ENCODE measurements at regions of chr1 and their contacts with region 1.

Region 1: DNA sequence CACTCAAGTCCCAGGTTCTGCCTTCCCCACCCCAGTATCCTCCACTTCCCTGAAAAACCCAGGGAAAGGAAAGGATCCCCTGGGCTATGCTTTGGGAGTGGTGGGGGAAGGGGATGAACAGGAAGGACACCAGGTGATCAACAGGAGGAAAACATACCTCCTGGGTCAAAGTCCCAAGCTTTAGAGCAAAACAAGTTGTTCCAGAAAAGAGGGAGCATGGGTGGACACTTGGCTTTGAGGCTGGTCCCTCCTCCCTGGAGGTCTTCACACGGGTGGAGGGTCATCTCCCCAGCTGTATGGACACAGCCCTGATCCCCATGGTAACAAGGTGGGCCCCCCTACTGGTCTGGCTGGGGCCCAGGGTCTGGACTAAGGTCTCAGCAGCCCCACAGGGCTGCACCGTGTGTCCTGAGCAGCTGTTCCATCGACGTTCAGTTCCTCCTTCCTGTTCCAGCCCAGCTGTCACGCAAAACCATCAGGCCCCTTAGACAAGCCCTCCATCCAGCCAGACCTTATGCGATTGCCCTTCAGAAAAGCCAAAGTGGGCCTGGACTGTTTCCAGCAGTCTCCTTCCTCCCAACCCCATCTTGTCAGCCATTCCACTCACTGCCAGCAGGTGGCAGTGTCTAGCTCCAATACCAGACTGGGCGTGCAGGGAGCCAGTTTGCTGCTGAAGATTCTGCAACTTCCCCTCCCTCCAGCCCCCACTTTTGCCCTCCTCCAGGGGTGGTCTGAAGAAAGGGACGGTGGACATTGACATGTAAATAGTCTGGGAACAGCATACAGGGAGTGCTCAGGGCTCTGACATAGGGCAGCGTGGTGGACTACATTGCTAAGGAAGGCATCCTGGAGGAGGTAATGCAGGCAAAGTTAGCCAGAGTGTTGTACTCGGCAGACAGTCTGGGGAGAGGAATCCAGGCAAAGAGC is 2.9 kb upstream of the PDZK1IP1 start:
- DNase-seq: no peak
- H3K4me3 ChIP-seq: no peak overlapping the region
- H3K27ac ChIP-seq: peak overlapping the region in 1 of 4 donors; percentile 85
- H3K4me1 ChIP-seq: peaks cover 24 to 55% (median 36%) of the 10 kb centered on the region in 3 donors
- H3K27me3 ChIP-seq: peaks cover 0 to 19% (median 0%) of the 10 kb centered on the region in 4 donors
- CTCF ChIP-seq: peak; percentile 83 to 95 (median 90)
- POLR2A ChIP-seq: no peak

Region 2: GRCh38 chr1:47262787-47263413 is 70.2 kb after region 1 on chr1:
- intact Hi-C with region 1: loop called (anchors 10 kb)
- DNase-seq: no peak
- H3K4me3 ChIP-seq: no peak overlapping the region
- H3K27ac ChIP-seq: no peak overlapping the region
- H3K4me1 ChIP-seq: no peaks in the 10 kb centered on the region
- H3K27me3 ChIP-seq: no peaks in the 10 kb centered on the region
- CTCF ChIP-seq: peak; percentile 28 to 78 (median 53)
- POLR2A ChIP-seq: no peak

Region 3: GRCh38 chr1:47432071-47433036 is 239.6 kb after region 1 on chr1:
- intact Hi-C with region 1: loop called (anchors 5 kb)
- DNase-seq: no peak
- H3K4me3 ChIP-seq: peak overlapping the region in 2 of 4 donors; percentile 15 to 29
- H3K27ac ChIP-seq: no peak overlapping the region
- H3K4me1 ChIP-seq: peaks cover 32 to 52% (median 37%) of the 10 kb centered on the region in 3 donors
- H3K27me3 ChIP-seq: peaks cover 5 to 100% (median 24%) of the 10 kb centered on the region in 4 donors
- CTCF ChIP-seq: peak; percentile 57 to 73 (median 66)
- POLR2A ChIP-seq: no peak

Measured in esophagus squamous epithelium (tissue), 5 donors.